GM10248 (cell line): ENCODE measurements at regions of chr18 and their contacts with region 1.

Region 1: GRCh38 chr18:32271672-32272208 is 81.9 kb downstream of the MEP1B start:
- DNase-seq: peak; percentile 63
- CTCF ChIP-seq: peak; percentile 67

Region 2: DNA sequence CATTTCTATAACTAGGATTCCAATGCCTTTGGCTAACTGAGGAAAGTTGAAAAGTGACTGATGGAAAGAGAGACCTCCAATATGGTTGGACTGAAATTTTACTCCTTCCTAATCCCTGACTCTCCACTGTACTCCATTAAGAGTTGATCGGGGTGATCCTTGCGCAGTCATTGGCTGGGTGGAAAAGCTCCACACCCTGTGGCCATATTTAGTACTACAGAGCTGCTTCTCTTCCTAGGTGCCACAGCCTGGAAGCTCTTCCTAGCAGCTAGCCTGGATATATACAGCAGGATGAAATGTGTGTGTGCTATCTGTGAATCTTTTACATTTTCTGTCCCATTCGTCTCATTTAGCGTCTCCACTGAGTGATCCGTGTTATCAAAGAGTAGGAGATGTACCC is 10.7 kb before region 1 on chr18:
- CTCF ChIA-PET with region 1: interaction called, 25 read pairs
- POLR2A ChIA-PET with region 1: no interaction called
- DNase-seq: no peak
- CTCF ChIP-seq: no peak

Region 3: DNA sequence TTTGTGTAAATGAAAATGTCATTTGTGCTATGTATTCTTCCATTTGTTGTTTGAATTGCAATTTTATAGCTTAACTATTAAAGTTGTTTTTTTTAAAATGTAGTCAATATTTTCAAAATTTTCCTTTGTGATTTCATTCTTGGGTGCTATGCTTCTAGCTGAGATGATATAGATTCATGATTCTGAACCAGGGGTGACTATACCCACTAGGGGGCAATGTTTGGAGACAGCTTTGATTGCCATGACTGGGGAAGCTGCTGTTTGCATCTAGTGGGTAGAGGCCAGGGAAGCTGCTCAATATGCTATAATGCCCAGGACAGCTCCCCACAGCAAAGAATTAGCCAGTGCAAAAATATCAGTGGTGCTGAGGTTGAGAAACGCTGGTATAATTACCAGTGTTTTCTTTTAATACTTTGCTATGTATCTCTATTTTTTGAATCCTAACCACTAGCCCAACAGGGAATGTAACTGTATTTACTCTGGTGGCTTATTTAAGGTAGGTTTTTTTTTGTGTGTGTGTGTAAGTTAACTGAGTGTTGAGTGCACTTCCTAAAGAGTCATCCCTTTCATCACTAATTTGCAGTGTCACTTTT is 17.8 kb after region 1 on chr18:
- CTCF ChIA-PET with region 1: interaction called, 25 read pairs
- POLR2A ChIA-PET with region 1: no interaction called
- DNase-seq: peak; percentile 41
- CTCF ChIP-seq: peak; percentile 54

Region 4: DNA sequence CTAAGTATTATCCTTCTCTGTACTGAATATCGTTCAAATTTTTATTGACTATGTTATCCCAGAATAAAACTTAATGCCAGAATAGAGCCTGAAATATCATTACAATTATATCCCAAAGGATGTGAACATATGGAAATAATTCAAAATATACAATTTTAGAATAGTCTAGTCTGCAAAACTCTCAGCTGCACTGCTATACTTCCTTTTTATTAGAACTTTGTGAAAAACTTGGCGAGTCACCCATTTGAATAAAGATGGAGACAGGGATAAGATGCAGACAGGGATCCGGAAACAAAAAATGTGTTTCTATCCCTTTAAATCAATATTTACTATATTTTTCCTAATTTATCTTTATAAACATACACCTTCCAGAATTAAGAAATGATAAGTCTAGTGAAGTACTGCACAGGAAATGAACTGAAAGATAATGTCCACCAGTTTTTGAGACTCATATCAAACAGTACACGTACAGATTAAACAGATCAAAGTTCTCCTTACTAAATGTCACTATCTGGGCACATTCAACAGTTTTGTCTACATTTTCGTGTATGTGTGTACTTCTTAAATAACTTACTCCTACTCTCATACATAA is 25.9 kb after region 1 on chr18:
- CTCF ChIA-PET with region 1: interaction called, 12 read pairs
- POLR2A ChIA-PET with region 1: no interaction called
- DNase-seq: no peak
- CTCF ChIP-seq: no peak

Region 5: GRCh38 chr18:32470713-32471633 is 199.2 kb after region 1 on chr18 and contains the start of gene GAREM1:
- CTCF ChIA-PET with region 1: interaction called, 26 read pairs
- POLR2A ChIA-PET with region 1: no interaction called
- DNase-seq: peak; percentile 88
- CTCF ChIP-seq: peak; percentile 72